ENCODE measurements at regions of chr1 and their contacts with region 1.

Region 1: DNA sequence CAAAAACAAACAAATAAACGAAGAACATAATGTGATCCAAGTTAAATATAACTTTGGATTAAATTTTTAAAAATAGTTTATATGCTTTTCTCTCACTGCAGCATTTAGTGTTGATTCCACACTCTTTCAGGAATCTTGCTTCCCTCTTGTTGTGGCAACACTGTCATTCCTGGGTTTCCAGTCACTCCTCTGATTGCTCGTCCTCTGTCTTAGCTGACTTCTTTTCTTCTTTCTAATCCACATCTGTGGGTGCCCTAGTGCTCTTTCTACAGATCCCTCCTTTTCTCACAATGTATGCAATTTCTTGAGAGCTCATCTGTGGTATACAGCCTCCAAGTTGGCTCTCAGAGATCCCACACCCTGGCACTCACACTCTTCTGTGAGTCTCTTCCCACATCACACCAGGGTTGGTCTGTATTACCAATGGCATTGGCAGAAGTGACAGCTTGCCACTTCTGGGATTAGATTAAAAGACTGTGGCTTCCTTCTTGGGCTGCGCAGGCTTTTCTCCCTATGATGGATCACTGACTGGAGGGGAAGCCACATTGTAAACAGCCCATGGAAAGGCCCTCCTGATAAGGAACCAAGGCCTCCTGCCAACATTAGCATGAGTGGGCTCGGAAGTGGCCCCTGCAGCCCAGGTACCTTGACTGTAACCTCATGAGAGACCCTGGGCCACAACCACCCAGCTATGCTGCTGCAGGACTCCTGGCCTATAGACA is 11.5 kb upstream of the MYOC start:
- DNase-seq: no peak

Region 2: GRCh38 chr1:171741872-171742576 is 78.0 kb after region 1 on chr1 and contains the start of gene VAMP4:
- intact Hi-C with region 1: no loop called
- DNase-seq: peak; percentile 96
- total RNA-seq, gene VAMP4: 16.8 to 21.0 TPM

Region 3: GRCh38 chr1:171935664-171936063 is 271.6 kb after region 1 on chr1:
- intact Hi-C with region 1: loop called in 1 of 2 experiments (anchors 5 kb)
- DNase-seq: no peak